Cardiac septum (tissue), 1 donor: ENCODE measurements at regions of chr17 and their contacts with region 1.

Region 1: GRCh38 chr17:76408052-76408849 is 23.8 kb downstream of the SPHK1 start:
- DNase-seq: no peak

Region 2: DNA sequence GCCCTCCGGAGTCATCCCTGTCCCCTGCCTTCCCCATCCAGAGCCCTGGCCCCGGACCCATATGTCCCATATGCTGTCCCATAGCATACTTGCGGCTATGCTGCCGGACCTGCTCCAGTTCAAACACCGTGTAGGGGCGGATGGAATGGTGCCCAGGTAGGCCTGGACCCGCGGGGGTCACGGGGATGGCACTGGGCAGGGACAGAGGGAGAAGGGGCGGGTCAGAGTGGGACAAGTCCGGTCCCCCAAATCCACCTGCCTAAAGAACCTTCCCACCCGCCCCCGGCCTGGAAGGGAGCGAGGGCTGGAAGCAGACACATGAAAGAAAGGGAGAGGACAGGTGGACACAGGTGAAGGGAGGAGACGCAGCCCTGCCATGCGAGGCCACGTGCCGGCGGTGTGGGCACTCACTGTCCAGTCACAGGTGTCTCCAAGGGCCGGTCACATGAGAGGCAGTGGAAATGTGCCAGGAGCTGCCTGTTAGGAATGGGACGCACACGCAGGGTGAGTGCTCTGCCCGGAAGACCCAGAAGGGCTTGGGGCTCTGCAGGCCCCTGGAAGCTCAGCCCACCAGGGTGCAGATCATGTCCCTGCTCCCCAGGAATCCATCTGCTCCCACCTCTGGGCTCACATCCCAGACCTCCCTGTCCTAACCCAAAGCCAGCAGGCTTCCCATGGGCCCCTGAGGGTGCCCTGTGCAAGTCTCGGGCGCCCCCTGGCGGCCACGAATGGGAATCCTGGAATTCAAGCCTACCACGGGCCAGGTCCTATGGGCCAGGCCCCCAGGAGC is 129.1 kb before region 1 on chr17:
- intact Hi-C with region 1: no loop called
- DNase-seq: peak; percentile 93

Region 3: GRCh38 chr17:76452660-76453430 is 44.6 kb after region 1 on chr17 and contains the start of gene UBE2O:
- intact Hi-C with region 1: loop called (anchors 2 kb)
- DNase-seq: peak; percentile 97
- total RNA-seq, gene UBE2O: 31.1 TPM

Region 4: GRCh38 chr17:76458580-76459490 is 50.6 kb after region 1 on chr17:
- intact Hi-C with region 1: loop called (anchors 2 kb)
- DNase-seq: no peak

Region 5: DNA sequence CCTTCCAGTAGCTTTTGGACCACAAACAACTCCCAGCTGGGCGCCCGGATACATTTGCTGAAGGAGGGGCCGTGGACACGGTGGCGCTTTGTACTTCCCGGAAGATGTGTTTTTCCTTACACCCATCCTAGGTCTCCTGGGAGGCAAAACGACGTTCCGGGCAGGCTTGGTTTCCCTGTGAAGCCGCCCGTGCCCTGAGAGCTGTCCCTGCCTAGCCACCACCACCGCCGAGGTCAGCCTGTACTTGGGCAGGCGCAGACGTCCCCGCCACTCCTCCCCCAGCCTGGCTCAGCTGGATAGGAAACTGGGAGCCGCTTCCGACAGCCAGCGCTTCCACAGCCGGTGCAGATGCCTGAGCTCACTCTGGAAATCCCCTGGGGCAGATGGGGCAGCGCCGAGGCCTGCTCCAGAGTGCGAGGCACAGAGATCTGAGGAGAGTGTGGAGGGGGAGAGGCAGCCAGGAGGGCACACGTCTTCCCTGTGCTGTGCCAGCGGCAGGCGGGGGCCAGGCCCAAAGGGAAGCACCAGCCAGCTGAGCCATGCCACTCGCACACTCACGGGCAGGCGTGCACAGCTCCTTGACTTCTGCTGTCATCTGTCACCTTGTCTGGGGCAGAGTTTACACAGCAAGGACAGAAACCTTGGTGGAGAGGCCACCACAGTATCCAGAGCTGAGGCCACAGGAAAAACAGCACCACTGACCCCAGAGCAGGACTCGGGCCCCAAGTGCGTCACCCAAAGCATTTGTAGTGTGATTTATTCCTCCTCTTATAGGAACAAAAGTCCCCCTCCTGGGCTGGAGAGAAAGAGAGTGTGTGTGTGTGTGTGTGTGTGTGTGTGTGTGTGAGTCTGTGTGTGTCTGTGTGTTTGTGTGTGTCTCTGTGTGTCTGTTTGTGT is 90.0 kb after region 1 on chr17:
- intact Hi-C with region 1: loop called (anchors 5 kb)
- DNase-seq: peak; percentile 90